ENCODE measurements at regions of chr9 and their contacts with region 1.

Region 1: DNA sequence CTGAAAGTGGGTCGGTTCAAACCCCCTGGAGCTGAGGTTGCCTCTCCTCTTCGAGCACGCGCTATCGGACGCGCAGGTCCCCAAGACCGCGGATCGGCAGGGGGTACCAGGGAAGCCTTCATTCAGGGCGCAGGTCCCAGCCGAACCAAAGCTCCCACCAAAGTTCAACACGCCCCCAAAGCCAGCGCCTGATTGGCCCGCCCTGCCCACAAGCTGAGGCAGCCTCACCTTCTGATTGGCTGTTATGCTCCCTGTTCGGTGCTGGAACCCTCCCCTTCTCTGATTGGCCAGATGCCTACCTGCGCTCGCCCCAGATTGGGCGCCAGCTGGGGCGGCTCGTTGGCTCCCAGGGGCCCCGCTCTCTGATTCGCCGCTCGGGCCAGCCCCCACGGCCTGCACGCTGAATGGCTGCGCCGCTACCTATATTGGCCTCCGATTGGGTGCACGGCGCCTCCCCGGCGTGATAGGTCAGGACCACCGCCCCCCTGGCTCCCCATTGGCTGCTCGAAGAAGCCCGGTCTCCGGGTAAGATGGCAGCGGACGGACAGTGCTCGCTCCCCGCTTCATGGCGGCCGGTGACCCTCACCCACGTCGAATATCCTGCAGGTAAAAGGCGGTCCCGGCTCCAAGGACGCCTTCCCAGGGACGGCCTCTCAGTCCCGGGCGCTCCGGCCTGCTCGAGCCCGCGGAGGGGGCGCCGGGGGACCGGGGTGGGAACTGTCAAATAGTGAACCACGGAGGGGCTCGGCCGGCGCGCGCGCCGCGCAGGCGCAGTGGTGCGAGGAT is at the start of gene DOLPP1:
- DNase-seq: peak; percentile 100
- H3K4me3 ChIP-seq: peak within 1 kb of the TSS; percentile 62 to 81 (median 75)
- H3K27ac ChIP-seq: no peak within 1 kb of the TSS
- H3K4me1 ChIP-seq: peaks cover 16% of the 10 kb centered on the region
- H3K27me3 ChIP-seq: no peaks in the 10 kb centered on the region
- CTCF ChIP-seq: no peak
- POLR2A ChIP-seq: peak; percentile 6
- total RNA-seq, gene DOLPP1: 17.7 and 26.6 TPM in 2 replicates

Region 2: DNA sequence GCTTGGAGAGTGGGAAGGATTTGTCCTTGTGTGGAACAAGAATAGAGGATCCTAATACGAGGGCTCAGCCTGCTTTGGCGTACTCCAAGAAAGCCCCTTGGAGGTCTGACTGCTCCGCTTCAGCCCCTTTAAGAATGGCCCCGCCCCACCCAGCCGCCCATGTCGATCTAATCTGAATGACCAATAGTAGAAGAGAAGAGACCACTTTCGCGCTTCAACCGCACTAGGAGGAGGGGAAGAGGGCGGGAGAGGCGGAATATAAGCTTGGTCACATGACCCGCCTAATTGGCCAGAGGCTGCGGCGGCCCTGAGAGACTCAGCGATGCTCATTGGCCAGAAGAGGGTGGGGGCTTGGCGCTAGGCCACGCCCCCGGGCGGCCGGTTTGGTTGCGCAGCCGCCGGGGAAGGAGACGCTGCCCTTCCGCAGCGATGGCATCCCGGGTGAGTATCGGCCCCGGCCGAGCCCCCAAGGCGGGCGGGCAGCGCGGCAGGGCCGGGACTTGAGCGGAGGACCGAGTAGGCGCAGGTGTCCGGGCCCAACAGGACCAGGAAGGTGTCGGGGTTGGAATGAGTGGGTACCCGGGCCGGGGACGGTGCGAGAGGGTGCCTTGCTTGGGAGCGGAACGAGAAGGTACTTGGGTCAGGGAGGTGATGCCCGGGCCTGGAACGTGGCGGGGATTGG is 44.4 kb before region 1 on chr9 and contains the start of gene MIGA2:
- CTCF ChIA-PET with region 1: no interaction called
- POLR2A ChIA-PET with region 1: no interaction called
- dilution Hi-C with region 1: no loop called
- intact Hi-C with region 1: loop called (anchors 2 kb)
- DNase-seq: peak; percentile 99
- H3K4me3 ChIP-seq: peak within 1 kb of the TSS; percentile 68 to 98 (median 73)
- H3K27ac ChIP-seq: no peak within 1 kb of the TSS
- H3K4me1 ChIP-seq: peaks cover 11% of the 10 kb centered on the region
- H3K27me3 ChIP-seq: no peaks in the 10 kb centered on the region
- CTCF ChIP-seq: no peak
- POLR2A ChIP-seq: peak; percentile 93
- total RNA-seq, gene MIGA2: 28.0 and 29.5 TPM in 2 replicates

Region 3: DNA sequence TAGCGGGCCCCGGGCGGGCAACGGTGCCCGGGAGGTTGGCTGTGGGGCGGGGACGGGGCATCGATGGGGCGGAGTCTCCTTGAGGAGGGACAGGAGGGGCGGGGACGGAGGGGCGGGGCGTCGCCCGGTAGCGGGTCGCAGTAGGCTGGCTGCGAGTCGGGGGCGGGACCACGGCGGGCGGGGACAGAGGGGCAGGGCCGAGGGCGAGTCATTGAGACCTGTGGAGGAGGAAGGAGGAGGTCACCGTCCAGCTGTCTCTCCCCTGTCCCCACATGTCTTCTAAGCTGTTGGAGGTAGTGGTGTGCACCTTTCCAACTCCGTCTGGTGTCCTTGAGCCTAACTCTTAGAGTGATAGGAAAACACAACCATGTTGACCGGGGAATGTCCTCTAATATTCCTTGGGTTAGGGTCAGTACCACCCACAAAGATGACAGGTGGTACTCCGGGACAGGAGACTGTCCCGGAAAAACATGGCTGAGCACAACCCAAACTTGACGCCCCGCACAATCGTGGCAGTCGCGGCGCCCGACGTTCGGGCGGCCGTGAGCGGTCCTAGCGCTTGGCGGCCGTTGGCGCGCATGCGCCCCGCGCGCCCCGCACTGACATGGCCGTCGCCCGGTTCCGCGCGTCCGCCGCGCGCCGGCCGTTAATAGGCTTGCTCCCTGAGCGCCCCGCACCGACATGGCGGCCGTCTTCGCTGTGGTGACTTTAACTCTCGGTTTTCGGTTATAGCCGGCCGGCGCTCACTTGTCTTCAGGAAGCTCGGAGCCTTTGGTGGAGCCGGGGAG is 30.1 kb after region 1 on chr9 and contains the starts of genes CRAT and PTPA:
- CTCF ChIA-PET with region 1: no interaction called
- POLR2A ChIA-PET with region 1: no interaction called
- dilution Hi-C with region 1: no loop called
- intact Hi-C with region 1: loop called (anchors 1 kb)
- DNase-seq: peak; percentile 91
- H3K4me3 ChIP-seq: peak within 1 kb of the TSS; percentile 66 to 97 (median 85)
- H3K27ac ChIP-seq: peak within 1 kb of the TSS; percentile 61
- H3K4me1 ChIP-seq: peaks cover 10% of the 10 kb centered on the region
- H3K27me3 ChIP-seq: no peaks in the 10 kb centered on the region
- CTCF ChIP-seq: no peak
- POLR2A ChIP-seq: peak; percentile 96
- total RNA-seq, gene CRAT: 34.2 and 36.8 TPM in 2 replicates
- total RNA-seq, gene PTPA: 121 and 123 TPM in 2 replicates

Region 4: GRCh38 chr9:129148463-129149204 is 67.8 kb after region 1 on chr9:
- CTCF ChIA-PET with region 1: no interaction called
- POLR2A ChIA-PET with region 1: no interaction called
- dilution Hi-C with region 1: no loop called
- intact Hi-C with region 1: no loop called
- DNase-seq: no peak
- H3K4me3 ChIP-seq: no peak overlapping the region
- H3K27ac ChIP-seq: no peak overlapping the region
- H3K4me1 ChIP-seq: peaks cover 9% of the 10 kb centered on the region
- H3K27me3 ChIP-seq: no peaks in the 10 kb centered on the region
- CTCF ChIP-seq: no peak
- POLR2A ChIP-seq: no peak

Measured in endothelial cell of umbilical vein (primary cell).